Naive thymus-derived CD8-positive, alpha-beta T cell (primary cell): ENCODE measurements at regions of chr17 and their contacts with region 1.

Region 1: DNA sequence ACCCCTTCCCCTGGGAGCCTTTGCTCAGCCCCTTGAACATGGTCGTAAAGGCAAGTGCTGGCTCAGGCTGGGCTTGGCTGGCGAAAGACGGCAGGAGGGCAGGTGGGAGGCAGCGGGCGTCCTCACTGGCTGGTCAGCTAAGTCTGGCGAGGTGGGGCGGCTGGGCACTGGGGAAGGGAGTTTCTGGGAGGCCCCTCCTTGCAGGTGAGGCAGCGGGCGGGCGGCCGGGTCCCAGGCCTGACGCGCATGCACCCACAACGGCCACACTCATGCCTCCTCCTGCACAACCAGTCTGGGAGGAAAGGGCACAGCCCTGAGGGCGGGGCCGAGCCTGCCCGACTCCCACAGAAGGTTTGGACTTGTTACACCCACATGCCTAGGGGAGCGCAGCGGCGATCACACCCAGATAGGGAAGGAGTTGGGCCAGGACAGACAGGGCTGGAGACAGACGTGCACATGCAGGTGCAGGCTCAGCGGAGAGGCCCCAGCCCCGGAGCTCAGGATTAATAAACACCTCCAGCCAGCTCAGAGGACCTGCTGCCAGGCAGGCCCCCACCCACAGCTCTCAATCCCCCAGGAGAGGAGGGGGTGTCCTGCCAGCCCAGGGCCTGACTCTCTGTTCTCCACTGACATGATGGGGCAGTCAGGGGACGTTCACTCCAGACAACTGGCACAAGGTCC is at the start of gene EVPL:
- DNase-seq: no peak
- ATAC-seq: no peak
- H3K4me3 Mint-ChIP-seq: peak within 1 kb of the TSS in 3 of 10 donors; percentile 50 to 93 (median 83)
- H3K27ac Mint-ChIP-seq: peak within 1 kb of the TSS; percentile 69 to 100 (median 100)
- H3K4me1 Mint-ChIP-seq: peaks cover 20 to 69% (median 43%) of the 10 kb centered on the region in 4 donors
- H3K27me3 Mint-ChIP-seq: no peaks in the 10 kb centered on the region
- polyA plus RNA-seq, gene EVPL: 0.74 to 1.6 TPM in 2 of 3 donors, not detected in the other

Region 2: GRCh38 chr17:75861927-75862317 is 165.4 kb before region 1 on chr17:
- POLR2A ChIA-PET with region 1: no interaction called
- DNase-seq: no peak
- ATAC-seq: no peak
- H3K4me3 Mint-ChIP-seq: no peak overlapping the region
- H3K27ac Mint-ChIP-seq: no peak overlapping the region
- H3K4me1 Mint-ChIP-seq: peaks cover 9 to 43% (median 30%) of the 10 kb centered on the region in 4 donors
- H3K27me3 Mint-ChIP-seq: no peaks in the 10 kb centered on the region

Region 3: DNA sequence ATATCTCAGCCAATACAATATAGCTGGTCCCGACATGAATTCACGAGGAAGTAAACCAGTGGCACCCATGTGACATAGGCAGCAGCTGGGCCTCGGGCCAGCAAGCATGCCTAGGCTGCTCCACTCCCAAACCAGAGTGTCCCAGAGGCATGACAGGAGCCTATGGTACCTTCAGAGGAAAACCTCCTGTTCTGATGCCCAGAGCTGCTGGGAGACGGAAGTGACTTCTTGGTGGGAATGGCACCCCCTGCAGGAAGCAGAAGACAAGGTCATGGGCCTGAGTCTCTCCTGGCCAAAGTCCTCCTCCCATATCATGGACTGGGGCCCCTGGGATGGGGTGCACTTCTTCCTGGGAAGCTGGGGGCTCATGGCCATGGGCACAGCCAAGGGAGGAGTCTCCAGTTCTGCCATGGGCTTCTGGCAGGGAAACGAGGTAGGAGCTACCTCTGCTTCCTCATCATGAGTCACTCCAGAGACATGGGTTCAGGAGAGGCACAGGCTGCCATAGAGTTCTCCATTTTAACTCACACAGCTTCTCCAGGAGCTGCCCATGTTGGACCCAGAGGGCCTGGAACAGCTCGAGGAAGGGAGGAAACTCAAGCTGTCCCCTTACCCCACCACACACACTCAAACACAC is 99.9 kb before region 1 on chr17:
- POLR2A ChIA-PET with region 1: no interaction called
- DNase-seq: no peak
- ATAC-seq: no peak
- H3K4me3 Mint-ChIP-seq: no peak overlapping the region
- H3K27ac Mint-ChIP-seq: no peak overlapping the region
- H3K4me1 Mint-ChIP-seq: no peaks in the 10 kb centered on the region
- H3K27me3 Mint-ChIP-seq: no peaks in the 10 kb centered on the region

Region 4: GRCh38 chr17:76072148-76072858 is 45.0 kb after region 1 on chr17 and contains the start of gene SRP68:
- POLR2A ChIA-PET with region 1: interaction called, 25 read pairs
- DNase-seq: peak; percentile 64 to 83 (median 75)
- ATAC-seq: peak; percentile 72 to 89
- H3K4me3 Mint-ChIP-seq: peak within 1 kb of the TSS; percentile 92 to 98 (median 96)
- H3K27ac Mint-ChIP-seq: peak within 1 kb of the TSS; percentile 85 to 98 (median 96)
- H3K4me1 Mint-ChIP-seq: peaks cover 23 to 60% (median 53%) of the 10 kb centered on the region in 4 donors
- H3K27me3 Mint-ChIP-seq: peaks cover 10 to 32% (median 14%) of the 10 kb centered on the region in 5 donors
- polyA plus RNA-seq, gene SRP68: 53.3 to 79.1 (median 64.5) TPM

Region 5: GRCh38 chr17:76088036-76088867 is 61.0 kb after region 1 on chr17:
- POLR2A ChIA-PET with region 1: no interaction called
- DNase-seq: no peak
- ATAC-seq: no peak
- H3K4me3 Mint-ChIP-seq: no peak overlapping the region
- H3K27ac Mint-ChIP-seq: peak overlapping the region in 1 of 10 donors; percentile 38
- H3K4me1 Mint-ChIP-seq: peaks cover 0 to 5% (median 3%) of the 10 kb centered on the region in 4 donors
- H3K27me3 Mint-ChIP-seq: no peaks in the 10 kb centered on the region

Region 6: GRCh38 chr17:76103274-76104139 is 76.2 kb after region 1 on chr17 and contains the start of gene EXOC7:
- POLR2A ChIA-PET with region 1: interaction called, 20 read pairs
- DNase-seq: peak; percentile 87 to 95 (median 92)
- ATAC-seq: peak; percentile 90 to 92
- H3K4me3 Mint-ChIP-seq: peak within 1 kb of the TSS; percentile 94 to 99 (median 97)
- H3K27ac Mint-ChIP-seq: peak within 1 kb of the TSS; percentile 95 to 99 (median 98)
- H3K4me1 Mint-ChIP-seq: peaks cover 6 to 39% (median 36%) of the 10 kb centered on the region in 4 donors
- H3K27me3 Mint-ChIP-seq: no peaks in the 10 kb centered on the region
- polyA plus RNA-seq, gene EXOC7: 46.0 to 62.6 (median 49.0) TPM

Region 7: GRCh38 chr17:76240461-76241203 is 213.3 kb after region 1 on chr17 and contains the start of gene RNF157:
- POLR2A ChIA-PET with region 1: no interaction called
- DNase-seq: peak; percentile 55 to 81 (median 67)
- ATAC-seq: peak; percentile 87 to 90
- H3K4me3 Mint-ChIP-seq: peak within 1 kb of the TSS; percentile 86 to 96 (median 92)
- H3K27ac Mint-ChIP-seq: peak within 1 kb of the TSS; percentile 84 to 97 (median 94)
- H3K4me1 Mint-ChIP-seq: peaks cover 27 to 65% (median 58%) of the 10 kb centered on the region in 4 donors
- H3K27me3 Mint-ChIP-seq: peaks cover 0 to 9% (median 0%) of the 10 kb centered on the region in 5 donors
- polyA plus RNA-seq, gene RNF157: 4.9 to 29.4 (median 10.5) TPM